OCI-LY7 (cell line): ENCODE measurements at regions of chr4 and their contacts with region 1.

Region 1: GRCh38 chr4:113209153-113209552 is 159.7 kb downstream of the ANK2 start:
- DNase-seq: no peak
- H3K4me3 ChIP-seq: no peak overlapping the region
- H3K27ac ChIP-seq: no peak overlapping the region
- H3K4me1 ChIP-seq: no peaks in the 10 kb centered on the region
- CTCF ChIP-seq: no peak

Region 2: DNA sequence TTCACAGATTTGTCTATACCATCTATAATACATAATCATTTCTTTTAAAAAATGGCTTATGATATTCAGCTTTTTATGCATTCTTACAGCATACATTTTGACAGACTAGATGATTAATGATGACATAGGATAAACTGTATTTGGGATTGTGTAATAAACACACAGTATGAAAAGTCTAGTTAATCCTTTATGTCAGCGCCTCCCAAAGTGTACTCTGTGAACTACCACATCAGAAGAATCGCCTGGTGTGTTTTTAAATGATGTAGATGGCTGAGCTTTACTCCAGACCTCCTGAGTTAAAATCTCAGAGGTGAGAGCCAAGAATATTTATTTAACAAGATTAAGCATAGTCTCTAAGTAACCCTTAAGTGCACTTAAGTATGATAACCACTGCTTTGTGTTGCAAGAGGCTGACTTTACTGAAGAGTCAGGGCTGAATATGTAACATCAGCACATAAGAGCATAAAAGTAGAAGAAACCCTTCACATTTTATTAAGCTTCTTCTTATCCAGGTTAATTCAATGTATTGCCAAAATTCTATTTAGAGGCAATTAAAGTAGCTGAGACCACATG is 55.5 kb before region 1 on chr4:
- CTCF ChIA-PET with region 1: no interaction called
- POLR2A ChIA-PET with region 1: no interaction called
- intact Hi-C with region 1: no loop called
- DNase-seq: no peak
- H3K4me3 ChIP-seq: no peak overlapping the region
- H3K27ac ChIP-seq: no peak overlapping the region
- H3K4me1 ChIP-seq: no peaks in the 10 kb centered on the region
- CTCF ChIP-seq: 0 out of 2 replicates have a peak, but pooled peaks have one; percentile 22

Region 3: GRCh38 chr4:113222471-113222870 is 13.3 kb after region 1 on chr4:
- CTCF ChIA-PET with region 1: no interaction called
- POLR2A ChIA-PET with region 1: interaction called, 3 read pairs
- intact Hi-C with region 1: loop called (anchors 1 kb)
- DNase-seq: no peak
- H3K4me3 ChIP-seq: no peak overlapping the region
- H3K27ac ChIP-seq: no peak overlapping the region
- H3K4me1 ChIP-seq: no peaks in the 10 kb centered on the region
- CTCF ChIP-seq: no peak